Aorta (tissue), 5 donors: ENCODE measurements at regions of chr5 and their contacts with region 1.

Region 1: DNA sequence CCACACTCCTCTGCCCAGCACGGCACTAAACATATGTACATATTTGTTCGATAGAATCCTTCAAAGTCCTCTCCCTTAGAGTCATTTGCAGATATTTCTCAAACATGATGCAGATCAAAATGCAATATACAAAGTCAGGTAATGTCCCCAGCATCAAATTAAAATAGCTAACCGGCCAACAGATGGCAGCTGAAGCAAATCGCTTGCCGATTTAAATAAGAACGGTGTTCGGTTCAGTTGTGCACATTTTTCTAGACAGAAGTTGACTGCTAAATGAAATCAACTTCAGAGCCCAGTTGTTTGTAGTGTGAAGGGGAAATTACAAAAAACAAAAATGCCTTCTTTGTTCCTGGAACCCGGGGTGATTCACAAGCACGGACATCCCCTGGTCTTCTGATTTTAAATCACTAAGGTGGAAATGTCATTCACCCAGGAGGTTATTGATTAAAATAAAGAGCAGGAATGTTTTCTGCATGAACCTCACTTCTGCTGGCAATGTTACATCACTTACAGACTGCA is 219.2 kb downstream of the EBF1 start:
- DNase-seq: no peak
- ATAC-seq: no peak
- H3K4me3 ChIP-seq: no peak overlapping the region
- H3K27ac ChIP-seq: no peak overlapping the region
- H3K4me1 ChIP-seq: peaks cover 12 to 38% of the 10 kb centered on the region in 2 donors
- H3K27me3 ChIP-seq: no peaks in the 10 kb centered on the region

Region 2: DNA sequence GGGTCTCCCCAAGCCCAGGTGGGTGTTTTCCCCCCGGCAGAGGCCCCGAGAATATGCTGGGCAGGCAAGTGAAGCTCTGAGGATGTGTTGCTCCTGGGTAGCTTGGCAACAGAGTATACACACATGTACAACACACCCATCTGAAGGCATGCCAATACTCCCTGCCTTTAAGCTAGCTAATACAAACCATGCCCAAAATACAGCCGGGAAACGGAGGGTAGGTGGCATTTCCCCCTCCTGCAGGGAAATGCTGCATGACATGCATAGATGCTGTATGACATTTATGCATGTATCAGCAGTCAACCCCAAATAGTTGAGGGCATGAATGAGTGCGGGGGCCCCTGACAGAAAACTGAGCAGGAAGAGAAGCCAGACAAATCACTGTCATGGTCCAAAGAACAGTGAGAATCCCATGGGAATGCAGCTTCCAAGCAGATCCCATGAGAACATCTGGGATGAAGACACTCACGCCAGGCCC is 394.9 kb before region 1 on chr5:
- intact Hi-C with region 1: no loop called
- DNase-seq: peak; percentile 66 to 76
- ATAC-seq: peak; percentile 81
- H3K4me3 ChIP-seq: no peak overlapping the region
- H3K27ac ChIP-seq: no peak overlapping the region
- H3K4me1 ChIP-seq: no peaks in the 10 kb centered on the region
- H3K27me3 ChIP-seq: no peaks in the 10 kb centered on the region

Region 3: DNA sequence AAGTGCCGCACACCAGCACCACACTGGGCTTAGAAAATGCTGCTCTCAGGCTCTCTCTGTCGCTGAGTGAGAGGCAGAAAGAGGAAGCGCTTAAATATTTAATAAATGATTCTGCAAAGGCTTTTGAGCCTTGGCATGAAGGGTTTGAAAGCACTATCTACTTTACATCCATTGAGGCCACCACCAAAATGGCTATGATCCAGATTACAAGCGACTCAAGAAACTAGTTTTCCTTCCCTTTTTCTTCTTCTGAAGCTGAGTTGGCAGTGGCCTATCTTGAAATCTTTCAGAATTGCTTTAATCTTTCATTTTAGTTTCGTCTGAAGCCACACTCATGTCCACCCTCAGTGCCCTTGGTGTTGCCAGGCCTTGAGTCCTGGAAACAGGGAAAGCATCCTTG is 159.6 kb after region 1 on chr5:
- intact Hi-C with region 1: loop called (anchors 5 to 10 kb)
- DNase-seq: no peak
- ATAC-seq: no peak
- H3K4me3 ChIP-seq: no peak overlapping the region
- H3K27ac ChIP-seq: peak overlapping the region; percentile 14 to 59
- H3K4me1 ChIP-seq: peaks cover 6 to 19% of the 10 kb centered on the region in 2 donors
- H3K27me3 ChIP-seq: no peaks in the 10 kb centered on the region

Region 4: DNA sequence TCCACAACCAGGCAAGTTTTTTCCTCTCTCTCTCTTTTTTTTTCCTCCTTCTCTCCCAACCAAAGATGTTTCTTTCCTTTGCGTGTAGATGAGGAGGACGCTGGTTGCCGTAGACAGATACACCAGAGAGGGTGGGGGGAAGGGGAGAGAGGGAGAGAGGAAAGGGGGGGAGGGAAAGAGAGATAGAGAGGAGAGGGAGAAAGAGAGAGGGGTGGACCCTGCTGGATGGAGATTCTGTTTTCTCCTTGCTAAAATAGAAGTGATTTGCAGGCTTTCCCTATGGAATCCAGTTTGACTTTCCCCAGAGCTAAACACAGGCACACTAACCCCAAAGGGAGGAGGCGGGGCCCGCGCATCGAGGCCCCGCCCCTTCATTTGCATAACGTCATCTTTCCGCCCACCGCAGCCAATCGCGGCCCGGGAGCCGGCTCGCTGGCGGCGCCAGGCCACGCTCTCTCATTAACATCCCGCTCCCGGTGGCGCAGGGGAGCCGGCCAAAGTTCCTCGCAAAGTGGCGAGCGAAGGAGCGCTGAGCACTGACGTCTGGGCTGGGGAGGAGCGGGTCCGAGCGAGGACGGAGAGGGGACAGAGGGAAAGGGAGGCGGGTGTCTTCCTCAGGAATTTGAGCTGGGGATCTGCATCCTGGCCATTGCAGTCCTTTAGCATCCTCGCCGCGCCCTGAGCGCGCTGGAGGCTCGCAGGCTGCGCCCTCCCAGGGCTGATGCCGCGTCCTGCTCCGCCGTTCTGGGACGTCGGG is 219.7 kb after region 1 on chr5:
- intact Hi-C with region 1: loop called (anchors 10 kb)
- DNase-seq: peak; percentile 95 to 97
- ATAC-seq: peak; percentile 94
- H3K4me3 ChIP-seq: peak overlapping the region; percentile 55 to 94
- H3K27ac ChIP-seq: peak overlapping the region; percentile 17 to 80
- H3K4me1 ChIP-seq: no peaks in the 10 kb centered on the region
- H3K27me3 ChIP-seq: no peaks in the 10 kb centered on the region